Activated naive CD4-positive, alpha-beta T cell treated with anti-CD3 and anti-CD28 coated beads for 36 hours (primary cell): ENCODE measurements at regions of chr4 and their contacts with region 1.

Region 1: DNA sequence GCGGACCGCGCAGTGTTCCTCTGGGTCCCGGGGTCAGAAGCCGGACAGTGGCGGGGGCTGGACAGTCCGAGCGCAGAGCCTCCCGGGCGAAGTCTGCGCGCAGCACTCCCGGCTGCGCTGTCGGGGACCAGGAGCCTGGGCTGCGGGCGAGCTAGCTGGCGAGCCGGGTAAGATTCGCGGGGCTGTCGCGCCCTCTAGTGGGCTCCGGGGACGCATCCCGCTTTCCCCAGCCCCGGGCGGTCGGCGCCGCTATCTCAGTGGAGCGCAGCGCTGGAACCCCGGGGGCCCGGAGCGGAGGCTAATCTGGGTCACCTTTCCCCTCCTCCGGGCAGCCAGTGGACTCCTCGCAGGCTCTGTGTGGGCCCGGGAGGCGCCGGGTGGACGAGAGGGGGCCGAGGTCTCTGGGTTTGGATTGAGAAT is 4.2 kb downstream of the PDGFRA start:
- DNase-seq: peak; percentile 84
- H3K4me3 Mint-ChIP-seq: peak overlapping the region; percentile 70
- H3K27ac Mint-ChIP-seq: no peak overlapping the region
- H3K4me1 Mint-ChIP-seq: peaks cover 29% of the 10 kb centered on the region
- H3K27me3 Mint-ChIP-seq: peaks cover 57% of the 10 kb centered on the region

Region 2: DNA sequence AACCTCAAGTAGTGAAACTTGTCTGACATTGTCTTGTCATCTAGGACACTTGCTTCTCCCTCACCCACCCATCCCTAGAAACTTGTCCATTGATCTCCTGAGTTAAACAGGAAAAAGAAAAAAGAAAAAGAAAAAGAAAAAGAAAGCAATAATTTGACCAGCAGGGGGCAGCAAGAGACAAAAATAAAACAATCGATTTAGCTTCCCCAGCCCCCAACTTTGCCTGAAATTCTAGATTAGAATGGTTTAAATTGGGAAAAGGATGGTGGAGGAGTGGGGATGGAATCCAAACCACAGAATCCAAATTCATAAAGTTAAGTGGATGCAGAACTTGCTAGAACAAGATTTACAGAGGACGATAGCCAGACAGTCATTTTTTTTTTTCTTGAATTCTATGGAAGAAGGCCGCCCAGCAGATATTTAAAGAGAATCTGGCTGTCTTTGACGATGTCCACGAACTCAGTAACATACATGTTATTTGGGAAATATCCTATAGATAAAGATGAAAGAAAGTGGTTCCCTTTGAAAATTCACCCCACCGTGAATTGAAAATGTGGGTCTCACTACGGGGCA is 1857.1 kb before region 1 on chr4:
- CTCF ChIA-PET with region 1: interaction called, 5 read pairs
- intact Hi-C with region 1: loop called (anchors 1 kb)
- DNase-seq: peak; percentile 25
- H3K4me3 Mint-ChIP-seq: no peak overlapping the region
- H3K27ac Mint-ChIP-seq: no peak overlapping the region
- H3K4me1 Mint-ChIP-seq: no peaks in the 10 kb centered on the region
- H3K27me3 Mint-ChIP-seq: peaks cover 15% of the 10 kb centered on the region

Region 3: DNA sequence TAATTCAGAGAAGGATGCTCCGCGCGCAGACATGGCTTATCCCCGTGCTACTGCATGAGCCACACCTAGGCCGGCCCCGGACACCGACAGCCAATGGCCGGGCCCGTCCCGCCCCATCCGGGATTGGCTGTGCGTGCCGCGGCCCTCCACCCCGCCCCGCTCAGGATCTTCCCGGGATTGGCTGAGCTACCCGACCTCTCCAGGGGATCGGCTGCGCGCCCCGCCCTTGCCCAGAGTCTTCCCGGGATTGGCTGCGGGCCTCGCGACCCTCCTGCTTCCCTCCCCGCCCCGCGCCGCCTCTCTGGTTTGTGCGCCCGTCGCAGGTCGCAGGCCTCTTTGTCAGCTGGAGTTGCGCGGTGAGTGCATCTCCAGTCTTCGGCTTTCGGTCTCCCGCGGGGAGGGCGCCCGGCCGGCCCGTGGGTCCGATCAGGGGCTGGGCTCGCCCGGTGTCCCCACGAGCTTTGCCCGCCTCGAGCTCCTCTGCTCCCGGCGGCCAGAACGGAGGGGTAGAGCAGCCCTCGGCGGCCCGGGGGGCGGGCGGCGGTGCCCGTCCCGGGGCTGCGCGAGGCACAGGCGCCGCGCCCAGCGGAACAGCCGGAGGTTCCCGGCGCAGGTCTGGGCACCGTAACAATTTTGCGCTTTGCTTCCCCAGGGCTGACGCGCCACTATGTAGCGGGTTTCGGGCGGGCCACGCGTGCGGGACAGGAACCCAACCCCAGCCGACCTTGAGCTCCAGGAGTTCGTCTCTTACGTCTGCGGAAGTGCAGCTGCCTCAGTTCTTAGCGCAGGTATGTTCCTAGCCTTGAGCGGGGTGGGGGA is 1520.9 kb before region 1 on chr4:
- CTCF ChIA-PET with region 1: no interaction called
- intact Hi-C with region 1: loop called (anchors 5 kb)
- DNase-seq: peak; percentile 97
- H3K4me3 Mint-ChIP-seq: peak overlapping the region; percentile 96
- H3K27ac Mint-ChIP-seq: peak overlapping the region; percentile 92
- H3K4me1 Mint-ChIP-seq: peaks cover 46% of the 10 kb centered on the region
- H3K27me3 Mint-ChIP-seq: no peaks in the 10 kb centered on the region

Region 4: GRCh38 chr4:53365486-53366300 is 867.6 kb before region 1 on chr4 and contains the start of gene SCFD2:
- CTCF ChIA-PET with region 1: interaction called, 3 read pairs
- intact Hi-C with region 1: loop called (anchors 2 kb)
- DNase-seq: peak; percentile 99
- H3K4me3 Mint-ChIP-seq: peak within 1 kb of the TSS; percentile 96
- H3K27ac Mint-ChIP-seq: peak within 1 kb of the TSS; percentile 96
- H3K4me1 Mint-ChIP-seq: peaks cover 38% of the 10 kb centered on the region
- H3K27me3 Mint-ChIP-seq: peaks cover 3% of the 10 kb centered on the region
- total RNA-seq, gene SCFD2: 14.3 to 15.1 TPM

Region 5: GRCh38 chr4:53914313-53915016 is 318.8 kb before region 1 on chr4:
- CTCF ChIA-PET with region 1: interaction called, 30 read pairs
- intact Hi-C with region 1: no loop called
- DNase-seq: peak; percentile 16
- H3K4me3 Mint-ChIP-seq: no peak overlapping the region
- H3K27ac Mint-ChIP-seq: no peak overlapping the region
- H3K4me1 Mint-ChIP-seq: no peaks in the 10 kb centered on the region
- H3K27me3 Mint-ChIP-seq: peaks cover 11% of the 10 kb centered on the region

Region 6: GRCh38 chr4:54217642-54218495 is 15.4 kb before region 1 on chr4:
- CTCF ChIA-PET with region 1: interaction called, 17 read pairs
- intact Hi-C with region 1: loop called (anchors 1 kb)
- DNase-seq: peak; percentile 70
- H3K4me3 Mint-ChIP-seq: peak overlapping the region; percentile 22
- H3K27ac Mint-ChIP-seq: no peak overlapping the region
- H3K4me1 Mint-ChIP-seq: peaks cover 4% of the 10 kb centered on the region
- H3K27me3 Mint-ChIP-seq: peaks cover 29% of the 10 kb centered on the region

Region 7: GRCh38 chr4:54473077-54473545 is 239.8 kb after region 1 on chr4:
- CTCF ChIA-PET with region 1: no interaction called
- intact Hi-C with region 1: no loop called
- DNase-seq: no peak
- H3K4me3 Mint-ChIP-seq: no peak overlapping the region
- H3K27ac Mint-ChIP-seq: no peak overlapping the region
- H3K4me1 Mint-ChIP-seq: no peaks in the 10 kb centered on the region
- H3K27me3 Mint-ChIP-seq: peaks cover 5% of the 10 kb centered on the region